ENCODE measurements at regions of chr14 and their contacts with region 1.

Region 1: DNA sequence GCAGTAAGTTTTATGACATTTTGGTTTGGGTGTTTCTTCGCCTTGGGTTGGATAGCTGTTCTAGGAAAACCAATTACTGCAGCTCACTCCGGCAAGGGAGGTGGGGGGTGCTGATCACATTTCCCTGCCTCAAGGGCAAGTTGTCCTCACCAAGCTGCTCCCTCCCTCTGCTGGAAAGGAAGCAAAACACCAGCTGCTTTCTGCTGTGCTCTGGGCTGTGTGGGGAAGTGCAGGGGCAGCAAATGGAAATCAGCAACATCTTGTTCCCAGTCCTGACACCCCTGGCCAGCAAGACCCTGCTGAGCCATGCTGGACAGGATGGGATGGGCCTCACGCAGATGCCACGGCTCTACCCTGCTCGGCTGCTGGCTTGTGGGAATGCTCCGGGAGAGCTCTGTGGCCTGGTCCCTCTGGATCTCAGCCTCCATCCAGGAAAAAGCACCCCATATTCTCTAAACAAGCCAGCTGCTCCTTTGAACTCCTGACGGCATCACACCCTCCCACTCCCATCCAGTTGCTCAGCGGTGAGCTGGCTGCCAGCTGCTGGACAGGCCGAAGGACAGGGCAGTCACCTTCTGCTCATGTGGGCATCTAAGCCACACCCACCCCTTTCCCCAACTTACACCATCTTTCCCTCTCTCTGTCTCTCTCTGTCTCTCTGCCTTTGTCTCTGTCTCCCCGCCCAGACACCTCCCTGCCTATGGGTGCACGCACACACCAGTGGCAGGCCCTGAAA is 52.4 kb upstream of the EIF5 start:
- DNase-seq: peak; percentile 59
- ATAC-seq: peak; percentile 58
- H3K4me3 Mint-ChIP-seq: no peak overlapping the region
- H3K27ac Mint-ChIP-seq: no peak overlapping the region
- H3K4me1 Mint-ChIP-seq: peaks cover 48% of the 10 kb centered on the region
- H3K27me3 Mint-ChIP-seq: peaks cover 52% of the 10 kb centered on the region
- CTCF ChIP-seq: no peak

Region 2: DNA sequence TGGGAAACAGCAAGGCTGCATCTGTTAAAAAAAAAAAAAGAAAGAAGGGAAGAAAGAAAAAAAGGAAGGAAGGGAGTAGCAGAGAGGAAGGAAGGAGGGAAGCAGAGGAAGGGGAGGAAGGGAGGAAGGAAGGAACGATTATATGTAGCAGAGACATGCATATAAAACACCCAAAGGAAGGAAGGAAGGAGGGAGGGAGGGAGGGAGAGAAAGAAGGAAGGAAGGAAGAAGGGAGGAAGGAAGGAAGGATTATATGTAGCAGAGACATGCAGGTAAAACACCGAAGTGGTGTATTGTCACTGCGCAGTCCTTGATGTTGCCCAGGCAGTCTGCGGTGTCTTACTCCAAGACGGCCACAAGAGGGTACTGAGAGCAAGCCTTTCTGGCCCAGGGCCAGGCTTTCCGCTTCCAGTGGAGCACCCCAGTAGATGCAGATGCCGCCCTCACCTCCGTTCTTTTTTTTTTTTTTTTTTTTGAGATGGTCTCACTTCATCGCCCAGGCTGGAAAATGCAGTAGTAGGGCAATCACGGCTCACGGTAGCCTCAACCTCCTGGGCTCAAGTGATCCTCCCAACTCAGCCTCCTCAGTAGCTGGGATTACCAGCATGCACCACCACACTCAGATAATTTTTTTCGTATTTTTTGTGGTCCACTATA is 203.4 kb before region 1 on chr14:
- CTCF ChIA-PET with region 1: interaction called, 19 read pairs
- POLR2A ChIA-PET with region 1: no interaction called
- DNase-seq: peak; percentile 77
- ATAC-seq: peak; percentile 78
- H3K4me3 Mint-ChIP-seq: no peak overlapping the region
- H3K27ac Mint-ChIP-seq: no peak overlapping the region
- H3K4me1 Mint-ChIP-seq: no peaks in the 10 kb centered on the region
- H3K27me3 Mint-ChIP-seq: peaks cover 5% of the 10 kb centered on the region
- CTCF ChIP-seq: peak; percentile 68; the same call in 1 of the 2 replicates

Region 3: DNA sequence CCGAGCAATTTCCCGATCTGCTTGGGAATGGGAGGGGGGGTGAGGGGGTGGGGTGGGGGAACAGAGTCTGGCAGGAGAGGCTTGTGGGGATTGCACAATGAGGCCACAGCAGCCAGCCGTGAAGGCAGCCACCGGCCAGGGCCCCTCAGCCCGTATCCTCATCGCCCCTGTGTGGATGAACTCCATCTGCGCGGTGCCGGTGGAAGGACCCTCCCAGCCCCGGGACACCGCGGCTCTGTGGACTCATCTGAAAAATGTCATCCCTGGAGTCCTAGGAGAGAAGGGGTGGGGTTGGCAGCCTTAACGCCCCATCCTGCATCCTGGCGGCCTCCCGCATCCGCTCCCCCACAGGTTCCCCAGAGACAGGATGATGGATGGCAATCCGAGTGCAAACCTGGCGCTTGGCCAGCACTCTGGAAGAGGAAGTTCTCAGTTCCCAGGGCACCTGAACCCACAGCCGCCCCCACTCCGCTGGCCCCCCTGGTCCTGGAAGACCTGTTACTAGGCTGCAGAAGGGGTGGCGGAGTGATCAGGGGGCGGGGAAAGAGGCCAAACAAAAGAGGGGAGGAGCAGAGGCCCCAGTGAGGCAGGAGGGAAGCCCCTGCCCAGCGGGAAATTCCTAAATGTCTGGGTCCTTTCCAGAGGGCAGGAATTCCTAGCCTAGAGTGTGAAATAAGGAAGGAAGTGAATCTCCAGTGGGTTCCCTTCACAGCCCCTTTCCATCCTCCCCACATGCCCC is 159.6 kb before region 1 on chr14:
- CTCF ChIA-PET with region 1: interaction called, 11 read pairs
- POLR2A ChIA-PET with region 1: no interaction called
- DNase-seq: no peak
- ATAC-seq: peak; percentile 17
- H3K4me3 Mint-ChIP-seq: peak overlapping the region; percentile 58
- H3K27ac Mint-ChIP-seq: no peak overlapping the region
- H3K4me1 Mint-ChIP-seq: peaks cover 16% of the 10 kb centered on the region
- H3K27me3 Mint-ChIP-seq: peaks cover 26% of the 10 kb centered on the region
- CTCF ChIP-seq: no peak

Region 4: GRCh38 chr14:103185051-103185992 is 96.3 kb before region 1 on chr14:
- CTCF ChIA-PET with region 1: interaction called, 14 read pairs
- POLR2A ChIA-PET with region 1: no interaction called
- DNase-seq: no peak
- ATAC-seq: no peak
- H3K4me3 Mint-ChIP-seq: no peak overlapping the region
- H3K27ac Mint-ChIP-seq: peak overlapping the region; percentile 49; the same call in 1 of the 2 replicates
- H3K4me1 Mint-ChIP-seq: peaks cover 31% of the 10 kb centered on the region
- H3K27me3 Mint-ChIP-seq: peaks cover 27% of the 10 kb centered on the region
- CTCF ChIP-seq: peak; percentile 62